IMR-90 (cell line): ENCODE measurements at regions of chr5 and their contacts with region 1.

Region 1: DNA sequence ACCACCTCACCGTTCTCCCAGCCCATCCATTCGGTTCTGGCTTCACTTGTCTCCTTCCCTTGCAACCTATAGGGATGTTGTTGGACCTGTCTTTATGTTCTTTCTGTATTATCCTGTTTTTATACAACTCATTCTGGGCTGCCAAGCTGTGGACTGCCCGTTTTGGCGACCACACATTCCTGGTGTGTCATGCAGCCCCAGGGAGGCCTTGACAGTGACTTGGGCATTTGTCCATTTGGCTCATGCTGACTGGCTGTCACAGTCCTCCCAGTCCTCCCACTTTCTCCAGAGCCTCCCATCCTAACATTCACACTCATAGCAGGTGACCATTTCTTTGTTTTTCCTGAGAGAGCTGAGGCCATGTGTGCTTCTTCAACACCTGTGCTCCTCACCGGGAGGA is 136.4 kb downstream of the SLF1 start:
- DNase-seq: no peak
- ATAC-seq: no peak
- H3K4me3 ChIP-seq: no peak overlapping the region
- H3K27ac ChIP-seq: no peak overlapping the region
- H3K4me1 ChIP-seq: no peaks in the 10 kb centered on the region
- H3K27me3 ChIP-seq: peaks cover 5% of the 10 kb centered on the region
- CTCF ChIP-seq: no peak
- POLR2A ChIP-seq: no peak
- RAD21 ChIP-seq: no peak

Region 2: DNA sequence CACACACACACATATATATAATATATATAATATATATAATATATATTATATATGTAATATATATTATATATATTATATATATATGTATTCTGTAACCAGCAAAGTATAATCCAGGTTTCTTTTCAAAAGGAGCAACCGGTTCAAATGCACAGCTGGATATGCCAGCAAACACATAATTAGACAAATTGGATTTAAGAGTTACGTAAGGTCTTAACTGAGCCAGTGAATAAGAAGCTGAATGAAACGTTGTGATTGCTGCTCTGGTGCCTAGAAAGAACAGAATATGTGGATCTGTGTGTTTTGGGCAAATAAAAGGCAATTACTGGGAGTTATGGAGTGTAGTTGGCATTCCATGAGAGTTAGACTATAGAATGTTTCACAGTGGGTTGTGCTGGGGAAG is 41.8 kb after region 1 on chr5:
- CTCF ChIA-PET with region 1: no interaction called
- POLR2A ChIA-PET with region 1: no interaction called
- dilution Hi-C with region 1: no loop called
- in situ Hi-C with region 1: no loop called
- intact Hi-C with region 1: no loop called
- DNase-seq: no peak
- ATAC-seq: no peak
- H3K4me3 ChIP-seq: no peak overlapping the region
- H3K27ac ChIP-seq: no peak overlapping the region
- H3K4me1 ChIP-seq: peaks cover 6% of the 10 kb centered on the region; the same call in 1 of the 2 replicates
- H3K27me3 ChIP-seq: no peaks in the 10 kb centered on the region
- CTCF ChIP-seq: no peak
- POLR2A ChIP-seq: no peak
- RAD21 ChIP-seq: no peak

Region 3: GRCh38 chr5:94811331-94811730 is 56.5 kb after region 1 on chr5:
- CTCF ChIA-PET with region 1: no interaction called
- POLR2A ChIA-PET with region 1: interaction called, 11 read pairs
- dilution Hi-C with region 1: no loop called
- in situ Hi-C with region 1: no loop called
- intact Hi-C with region 1: no loop called
- DNase-seq: no peak
- ATAC-seq: no peak
- H3K4me3 ChIP-seq: no peak overlapping the region
- H3K27ac ChIP-seq: no peak overlapping the region
- H3K4me1 ChIP-seq: no peaks in the 10 kb centered on the region
- H3K27me3 ChIP-seq: no peaks in the 10 kb centered on the region
- CTCF ChIP-seq: no peak
- POLR2A ChIP-seq: no peak
- RAD21 ChIP-seq: no peak

Region 4: DNA sequence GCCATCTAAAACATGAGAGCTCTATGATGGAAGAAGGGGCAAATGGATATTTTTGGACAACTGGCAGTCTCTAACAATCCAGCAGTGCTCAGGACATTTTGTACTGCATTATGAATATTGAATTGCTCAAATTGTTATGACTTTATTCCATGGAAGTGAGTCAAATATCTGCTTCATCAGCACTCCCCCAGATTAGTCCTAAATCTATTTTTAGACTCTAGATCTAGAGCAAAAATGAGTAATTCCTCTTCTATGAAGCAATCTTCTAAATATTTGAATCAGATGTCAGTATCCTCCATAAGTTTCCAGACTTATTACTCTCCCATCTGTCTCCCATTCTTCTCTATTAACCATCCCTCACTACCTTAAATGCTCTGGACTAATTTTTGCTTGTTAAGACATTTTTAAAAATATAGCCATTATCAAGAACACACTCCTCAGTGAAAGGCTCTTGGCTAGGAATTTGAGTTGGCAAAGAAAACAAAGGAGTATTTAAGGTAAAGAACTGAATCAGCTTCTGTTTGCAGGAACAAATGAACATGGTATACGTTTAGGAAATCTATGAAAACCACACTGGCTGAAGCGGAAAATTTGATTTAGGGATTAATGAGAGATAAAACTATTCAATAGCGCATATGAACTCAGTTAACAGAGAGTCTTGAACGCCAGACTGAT is 229.2 kb after region 1 on chr5:
- CTCF ChIA-PET with region 1: no interaction called
- POLR2A ChIA-PET with region 1: no interaction called
- dilution Hi-C with region 1: no loop called
- in situ Hi-C with region 1: no loop called
- intact Hi-C with region 1: no loop called
- DNase-seq: peak; percentile 58
- ATAC-seq: peak; percentile 21; the same call in 1 of the 2 replicates
- H3K4me3 ChIP-seq: no peak overlapping the region
- H3K27ac ChIP-seq: no peak overlapping the region
- H3K4me1 ChIP-seq: no peaks in the 10 kb centered on the region
- H3K27me3 ChIP-seq: no peaks in the 10 kb centered on the region
- CTCF ChIP-seq: no peak
- POLR2A ChIP-seq: no peak
- RAD21 ChIP-seq: no peak